Breast epithelium (tissue), 4 donors: ENCODE measurements at regions of chr2 and their contacts with region 1.

Region 1: DNA sequence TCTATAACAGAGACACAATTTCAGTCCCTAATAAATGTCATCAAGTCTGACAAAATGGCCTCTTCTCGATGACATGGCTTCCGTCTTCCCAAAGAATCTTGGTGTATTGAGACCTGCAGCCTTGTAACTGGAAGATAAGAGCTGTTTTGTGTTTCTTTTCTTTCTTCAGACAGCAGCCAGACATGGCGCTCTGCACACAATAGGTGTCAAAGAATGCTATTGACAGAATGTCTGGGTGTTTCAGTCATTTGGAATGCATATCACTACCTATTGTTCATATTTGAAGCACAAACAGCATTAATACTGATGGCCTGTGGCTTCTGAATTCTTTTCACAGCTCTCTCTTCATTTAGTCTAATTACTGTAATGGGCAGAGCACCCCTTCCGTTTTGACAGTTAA is 344.8 kb downstream of the RPRM start:
- DNase-seq: no peak
- H3K4me3 ChIP-seq: no peak overlapping the region
- H3K27ac ChIP-seq: no peak overlapping the region
- H3K4me1 ChIP-seq: no peaks in the 10 kb centered on the region
- H3K27me3 ChIP-seq: no peaks in the 10 kb centered on the region
- CTCF ChIP-seq: no peak
- POLR2A ChIP-seq: no peak

Region 2: DNA sequence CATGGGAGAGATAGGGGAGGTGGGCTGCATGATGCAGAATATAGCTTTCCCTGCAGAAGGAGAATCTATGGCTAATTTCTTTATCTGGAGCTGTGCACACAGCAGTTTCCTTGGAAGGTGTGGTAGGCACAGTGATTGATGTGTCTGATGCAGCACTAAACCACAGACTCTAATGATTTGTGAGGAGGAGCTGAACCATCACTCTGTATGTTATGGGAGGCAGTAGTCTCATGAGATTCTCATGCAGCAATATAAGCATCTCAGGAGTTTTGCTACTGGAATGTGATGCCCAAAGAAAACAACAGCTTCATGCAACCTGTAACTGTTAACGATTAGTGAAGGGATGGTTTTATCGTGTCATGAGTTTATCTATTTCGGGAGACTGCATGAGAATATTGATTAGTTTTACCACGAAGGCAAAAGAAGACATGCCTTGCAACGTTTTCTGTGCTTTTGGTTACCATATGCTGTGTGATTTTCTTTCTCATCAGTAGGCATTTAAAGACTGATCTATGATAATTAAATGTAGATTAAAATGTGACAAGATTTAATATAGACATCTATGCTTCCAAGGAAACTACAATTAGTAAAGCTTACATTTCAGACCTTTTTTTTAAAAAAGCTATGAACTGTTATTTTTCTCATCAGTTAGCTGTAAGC is 128.5 kb before region 1 on chr2:
- intact Hi-C with region 1: no loop called
- DNase-seq: no peak
- H3K4me3 ChIP-seq: no peak overlapping the region
- H3K27ac ChIP-seq: no peak overlapping the region
- H3K4me1 ChIP-seq: no peaks in the 10 kb centered on the region
- H3K27me3 ChIP-seq: no peaks in the 10 kb centered on the region
- CTCF ChIP-seq: no peak
- POLR2A ChIP-seq: no peak

Region 3: GRCh38 chr2:154425994-154426393 is 1292.3 kb after region 1 on chr2:
- intact Hi-C with region 1: loop called (anchors 10 kb)
- DNase-seq: no peak
- H3K4me3 ChIP-seq: no peak overlapping the region
- H3K27ac ChIP-seq: no peak overlapping the region
- H3K4me1 ChIP-seq: no peaks in the 10 kb centered on the region
- H3K27me3 ChIP-seq: no peaks in the 10 kb centered on the region
- CTCF ChIP-seq: no peak
- POLR2A ChIP-seq: no peak